Breast epithelium (tissue), 4 donors: ENCODE measurements at regions of chrX and their contacts with region 1.

Region 1: DNA sequence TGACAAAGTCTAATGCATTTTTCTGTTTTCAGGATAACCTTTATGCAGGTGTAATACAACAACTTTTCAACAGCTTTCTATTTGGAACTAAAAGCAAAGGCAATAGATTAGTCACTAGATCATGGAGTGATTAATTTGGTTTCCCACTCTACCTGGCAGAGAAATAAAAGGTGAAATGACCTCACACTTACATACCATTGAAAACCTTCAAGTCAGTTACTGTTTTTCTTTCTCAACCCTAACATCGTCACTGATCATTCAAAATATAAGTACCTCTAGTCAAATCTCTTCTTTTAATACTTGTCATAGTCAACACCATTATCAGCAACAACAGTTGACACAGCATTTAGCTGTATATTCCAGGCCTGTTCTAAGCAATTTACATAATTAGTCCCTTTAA is 85.1 kb upstream of the ZCCHC13 start:
- DNase-seq: no peak
- H3K4me3 ChIP-seq: no peak overlapping the region
- H3K27ac ChIP-seq: no peak overlapping the region
- H3K4me1 ChIP-seq: no peaks in the 10 kb centered on the region
- H3K27me3 ChIP-seq: peaks cover 0 to 37% of the 10 kb centered on the region in 2 donors
- CTCF ChIP-seq: no peak
- POLR2A ChIP-seq: no peak

Region 2: DNA sequence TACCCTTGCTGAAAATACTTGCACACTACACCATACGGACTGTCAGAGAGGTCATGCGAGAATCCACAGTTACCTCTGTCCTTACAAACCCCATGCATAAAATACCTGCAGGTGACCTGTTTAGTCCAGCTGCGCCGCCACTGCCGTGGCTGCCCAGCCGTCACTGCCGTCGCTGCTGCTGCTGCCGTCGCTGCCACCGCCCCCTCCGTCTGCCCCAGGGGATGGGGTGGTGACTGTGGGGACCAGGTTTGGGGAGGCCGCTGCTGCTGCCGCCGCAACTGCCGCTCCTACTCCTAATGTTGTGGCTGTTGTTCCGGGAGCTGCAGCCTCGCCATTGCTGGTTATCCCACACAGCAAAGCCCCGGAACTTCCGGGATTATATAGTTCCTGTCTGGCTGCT is 56.7 kb before region 1 on chrX:
- intact Hi-C with region 1: no loop called
- DNase-seq: no peak
- H3K4me3 ChIP-seq: no peak overlapping the region
- H3K27ac ChIP-seq: no peak overlapping the region
- H3K4me1 ChIP-seq: no peaks in the 10 kb centered on the region
- H3K27me3 ChIP-seq: peaks cover 0 to 15% of the 10 kb centered on the region in 2 donors
- CTCF ChIP-seq: no peak
- POLR2A ChIP-seq: no peak

Region 3: DNA sequence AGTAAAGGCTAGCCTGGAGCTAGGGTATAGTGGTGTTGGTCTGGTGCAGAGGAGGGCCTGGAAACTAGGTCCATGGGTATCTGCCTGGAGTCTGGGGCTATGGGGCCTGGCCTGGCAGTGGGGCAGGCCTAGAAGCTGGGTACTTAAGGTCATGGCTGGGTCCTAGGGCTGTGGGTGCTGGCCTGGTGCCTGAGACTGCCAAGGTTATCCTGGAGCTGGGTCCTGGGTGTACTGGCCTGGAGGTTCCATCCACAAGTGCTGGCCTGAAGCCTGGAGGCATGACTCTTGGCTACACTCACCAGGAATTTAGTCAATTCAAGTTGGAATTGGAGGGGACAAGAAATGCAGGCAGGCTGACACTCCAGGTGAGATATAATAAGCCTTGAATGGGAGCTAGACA is 23.3 kb before region 1 on chrX:
- intact Hi-C with region 1: no loop called
- DNase-seq: no peak
- H3K4me3 ChIP-seq: no peak overlapping the region
- H3K27ac ChIP-seq: no peak overlapping the region
- H3K4me1 ChIP-seq: no peaks in the 10 kb centered on the region
- H3K27me3 ChIP-seq: peaks cover 0 to 27% of the 10 kb centered on the region in 2 donors
- CTCF ChIP-seq: no peak
- POLR2A ChIP-seq: no peak

Region 4: GRCh38 chrX:74242050-74242449 is 23.2 kb after region 1 on chrX:
- intact Hi-C with region 1: loop called (anchors 1 kb)
- DNase-seq: no peak
- H3K4me3 ChIP-seq: peak overlapping the region in 1 of 3 donors; percentile 12
- H3K27ac ChIP-seq: peak overlapping the region; percentile 35 to 70
- H3K4me1 ChIP-seq: no peaks in the 10 kb centered on the region
- H3K27me3 ChIP-seq: peaks cover 0 to 24% of the 10 kb centered on the region in 2 donors
- CTCF ChIP-seq: no peak
- POLR2A ChIP-seq: no peak